Left ventricle myocardium inferior (tissue), 1 donor: ENCODE measurements at regions of chr6 and their contacts with region 1.

Region 1: DNA sequence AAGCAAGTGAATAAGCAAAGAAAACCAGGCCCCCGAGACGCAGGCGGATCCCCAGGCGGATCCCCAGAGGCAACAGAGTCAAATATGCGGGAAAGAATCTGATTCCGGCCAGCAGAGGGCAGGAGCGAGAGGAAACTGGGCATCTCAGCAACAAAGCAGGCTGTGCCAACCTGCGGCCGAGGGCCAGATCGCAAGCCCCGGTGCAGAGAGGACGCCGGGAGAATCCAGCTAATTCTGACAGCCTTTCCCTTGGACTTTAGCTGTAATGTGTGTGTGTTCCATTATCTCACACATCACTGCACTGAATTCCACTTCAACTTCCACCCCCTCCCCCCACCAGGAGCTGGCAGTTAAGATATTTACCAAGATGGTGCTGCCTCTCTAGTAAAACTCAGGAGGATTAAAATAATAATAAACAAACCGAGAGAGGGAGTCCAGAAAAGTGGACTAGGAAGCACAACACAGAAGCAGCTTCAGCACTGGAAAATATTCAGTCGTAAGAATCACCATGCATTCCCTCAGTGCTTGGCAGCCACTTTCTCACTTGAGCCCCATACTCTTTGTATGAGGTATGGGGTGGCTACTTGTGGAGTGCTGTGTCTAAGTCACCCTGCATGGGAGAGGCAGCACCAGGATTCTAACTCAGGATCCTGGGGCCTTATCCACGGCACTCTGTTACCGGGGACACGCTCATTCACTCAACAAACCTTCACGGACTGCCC is 66.2 kb upstream of the SNX9 start:
- DNase-seq: peak; percentile 88
- H3K4me3 ChIP-seq: no peak overlapping the region
- H3K27ac ChIP-seq: peak overlapping the region; percentile 27
- H3K4me1 ChIP-seq: peaks cover 30% of the 10 kb centered on the region
- H3K27me3 ChIP-seq: no peaks in the 10 kb centered on the region
- CTCF ChIP-seq: peak; percentile 88

Region 2: GRCh38 chr6:157561929-157562810 is 194.7 kb before region 1 on chr6:
- intact Hi-C with region 1: no loop called
- DNase-seq: no peak
- H3K4me3 ChIP-seq: no peak overlapping the region
- H3K27ac ChIP-seq: no peak overlapping the region
- H3K4me1 ChIP-seq: no peaks in the 10 kb centered on the region
- H3K27me3 ChIP-seq: no peaks in the 10 kb centered on the region
- CTCF ChIP-seq: no peak

Region 3: DNA sequence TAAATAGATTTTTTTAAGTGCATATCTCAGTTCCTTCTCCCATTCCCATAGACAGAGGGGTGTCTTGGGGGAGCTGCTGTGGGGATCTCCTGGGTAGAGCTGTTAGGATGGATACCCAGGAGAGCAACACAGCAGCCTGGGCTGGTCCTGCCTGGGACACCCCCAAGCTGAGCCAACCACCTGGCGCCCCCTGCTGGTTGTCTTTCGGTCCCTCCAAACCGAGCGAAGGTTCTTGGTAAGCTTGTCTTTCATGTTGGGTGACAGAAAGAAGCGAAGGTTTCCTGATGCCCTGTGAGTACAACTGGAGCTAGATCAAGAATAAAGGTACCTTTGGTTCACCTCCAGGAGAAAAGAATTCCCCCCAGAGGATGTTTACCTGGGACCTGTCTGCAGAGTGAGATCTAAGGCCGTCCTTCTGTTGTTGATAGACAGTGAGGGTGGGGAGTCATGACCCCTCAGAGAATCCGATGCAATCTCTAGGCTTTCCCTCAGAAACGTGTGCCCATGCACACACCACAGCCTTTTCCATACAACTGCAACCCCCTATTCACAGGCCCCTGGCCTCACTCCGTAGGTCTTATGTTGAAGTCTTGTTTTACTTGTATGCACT is 117.0 kb after region 1 on chr6:
- intact Hi-C with region 1: loop called (anchors 5 kb)
- DNase-seq: peak; percentile 73
- H3K4me3 ChIP-seq: no peak overlapping the region
- H3K27ac ChIP-seq: no peak overlapping the region
- H3K4me1 ChIP-seq: peaks cover 9% of the 10 kb centered on the region
- H3K27me3 ChIP-seq: no peaks in the 10 kb centered on the region
- CTCF ChIP-seq: peak; percentile 81

Region 4: DNA sequence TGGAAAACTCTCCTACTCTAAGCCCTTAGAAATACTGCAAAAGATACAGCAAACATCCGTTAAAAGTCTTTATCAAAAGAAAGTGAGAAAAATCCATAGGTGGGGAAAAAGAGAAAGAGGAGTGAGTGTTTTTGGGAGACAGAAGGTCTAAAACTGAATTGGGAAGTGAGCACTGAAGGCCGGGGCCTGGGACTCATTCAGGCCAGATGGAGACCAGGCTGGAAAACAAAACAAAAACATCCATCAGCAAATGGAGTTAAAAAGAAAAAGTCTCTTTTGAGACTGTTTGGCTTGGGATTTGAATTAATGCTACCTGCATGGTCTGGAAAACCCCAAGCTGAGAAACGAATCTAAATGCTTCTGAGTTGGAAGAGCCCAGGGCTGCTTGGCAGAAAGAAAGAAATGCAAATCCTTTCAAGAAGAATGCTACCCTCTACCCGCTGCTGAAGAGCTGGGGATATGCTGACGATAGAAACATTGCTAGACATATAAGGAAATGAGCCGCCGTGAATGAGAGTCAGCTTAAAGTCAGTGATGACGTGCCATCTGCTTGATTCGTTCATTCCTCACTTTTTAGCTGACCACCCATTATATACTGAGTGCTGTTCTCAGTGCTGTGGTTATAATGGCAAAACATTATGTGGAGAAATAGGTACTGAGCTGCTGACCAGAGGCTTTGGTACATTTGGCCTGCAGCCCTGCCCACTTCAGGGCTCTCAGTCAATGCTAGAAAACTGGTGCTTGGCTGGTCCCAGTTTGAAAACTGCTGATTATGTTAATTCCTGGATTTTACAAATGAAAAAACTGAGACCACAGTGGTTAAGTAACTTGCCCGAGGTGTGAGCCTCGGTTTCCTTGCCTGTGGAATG is 527.4 kb after region 1 on chr6:
- intact Hi-C with region 1: no loop called
- DNase-seq: no peak
- H3K4me3 ChIP-seq: peak overlapping the region; percentile 12
- H3K27ac ChIP-seq: peak overlapping the region; percentile 13
- H3K4me1 ChIP-seq: peaks cover 59% of the 10 kb centered on the region
- H3K27me3 ChIP-seq: no peaks in the 10 kb centered on the region
- CTCF ChIP-seq: no peak